WTC11 (cell line): ENCODE measurements at regions of chr17 and their contacts with region 1.

Region 1: DNA sequence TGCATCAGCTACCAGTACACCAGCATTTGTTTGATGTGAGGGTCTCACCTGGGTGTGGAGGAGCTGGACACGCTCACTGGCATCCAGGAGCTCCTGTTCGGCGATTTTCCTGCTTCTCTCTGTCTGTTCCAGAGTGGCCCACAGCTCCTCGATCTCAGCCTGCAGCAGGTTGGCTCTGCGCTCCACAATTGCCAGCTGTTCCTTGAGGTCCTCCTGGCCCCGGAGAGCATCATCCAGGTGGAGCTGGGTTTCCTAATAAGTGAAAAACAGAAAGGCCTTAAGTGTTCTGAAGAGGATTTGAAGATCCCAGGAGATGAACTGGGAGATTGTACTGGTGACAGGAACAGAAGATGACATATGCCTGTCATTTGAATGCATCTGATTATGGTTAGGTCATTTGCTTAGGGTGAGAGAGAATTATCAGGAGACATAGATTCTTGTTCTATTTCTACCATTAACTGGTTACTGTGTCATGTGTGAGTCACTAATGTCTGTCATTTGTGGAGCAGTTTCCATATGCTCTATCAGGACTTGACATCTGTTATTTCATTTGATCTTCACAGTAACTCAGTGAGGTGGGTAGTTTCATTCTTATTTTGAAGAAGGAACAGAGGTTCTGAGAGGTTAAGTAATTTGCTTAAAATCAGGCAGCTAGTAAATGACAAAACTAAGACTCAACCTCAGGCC is 21.5 kb upstream of the MYH13 start:
- DNase-seq: no peak
- ATAC-seq: no peak
- H3K4me3 Mint-ChIP-seq: no peak overlapping the region
- H3K27ac Mint-ChIP-seq: no peak overlapping the region
- H3K4me1 Mint-ChIP-seq: no peaks in the 10 kb centered on the region
- H3K27me3 Mint-ChIP-seq: no peaks in the 10 kb centered on the region; the same call in 1 of the 2 replicates
- CTCF ChIP-seq: no peak

Region 2: GRCh38 chr17:10265100-10265810 is 129.1 kb before region 1 on chr17:
- CTCF ChIA-PET with region 1: no interaction called
- POLR2A ChIA-PET with region 1: interaction called, 13 read pairs
- DNase-seq: no peak
- ATAC-seq: no peak
- H3K4me3 Mint-ChIP-seq: no peak overlapping the region
- H3K27ac Mint-ChIP-seq: no peak overlapping the region
- H3K4me1 Mint-ChIP-seq: peaks cover 8% of the 10 kb centered on the region
- H3K27me3 Mint-ChIP-seq: no peaks in the 10 kb centered on the region; the same call in 1 of the 2 replicates
- CTCF ChIP-seq: no peak

Region 3: DNA sequence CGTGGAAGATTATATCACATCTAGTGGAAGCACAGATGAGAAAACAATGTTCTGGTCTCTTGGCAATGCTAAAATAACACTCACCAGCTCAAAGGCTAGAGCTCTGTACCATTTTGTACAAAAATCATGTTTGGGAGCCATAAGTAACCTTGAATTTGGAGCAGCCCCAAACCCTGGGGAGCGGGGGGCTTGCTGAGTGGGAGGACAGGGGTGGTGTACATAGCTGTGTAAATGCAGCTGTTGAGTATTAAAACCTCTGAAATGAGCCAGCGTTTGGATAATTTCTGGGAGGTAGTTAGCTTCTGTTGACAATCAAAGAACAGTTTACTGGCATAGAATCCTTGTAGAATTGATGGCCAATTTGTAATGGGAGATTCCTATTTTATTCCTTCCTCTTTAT is 23.1 kb after region 1 on chr17:
- CTCF ChIA-PET with region 1: interaction called, 13 read pairs
- POLR2A ChIA-PET with region 1: no interaction called
- DNase-seq: no peak
- ATAC-seq: no peak
- H3K4me3 Mint-ChIP-seq: no peak overlapping the region
- H3K27ac Mint-ChIP-seq: 0 out of 2 replicates have a peak overlapping the region, but pooled peaks have one; percentile 10
- H3K4me1 Mint-ChIP-seq: peaks cover 27% of the 10 kb centered on the region
- H3K27me3 Mint-ChIP-seq: no peaks in the 10 kb centered on the region
- CTCF ChIP-seq: no peak